OCI-LY7 (cell line): ENCODE measurements at regions of chr2 and their contacts with region 1.

Region 1: GRCh38 chr2:65432227-65433190 is at the start of gene SPRED2:
- DNase-seq: peak; percentile 92
- H3K4me3 ChIP-seq: peak within 1 kb of the TSS; percentile 93
- H3K27ac ChIP-seq: peak within 1 kb of the TSS; percentile 77
- H3K4me1 ChIP-seq: peaks cover 44% of the 10 kb centered on the region
- CTCF ChIP-seq: no peak
- total RNA-seq, gene SPRED2: 4.9 and 8.0 TPM in 2 replicates

Region 2: DNA sequence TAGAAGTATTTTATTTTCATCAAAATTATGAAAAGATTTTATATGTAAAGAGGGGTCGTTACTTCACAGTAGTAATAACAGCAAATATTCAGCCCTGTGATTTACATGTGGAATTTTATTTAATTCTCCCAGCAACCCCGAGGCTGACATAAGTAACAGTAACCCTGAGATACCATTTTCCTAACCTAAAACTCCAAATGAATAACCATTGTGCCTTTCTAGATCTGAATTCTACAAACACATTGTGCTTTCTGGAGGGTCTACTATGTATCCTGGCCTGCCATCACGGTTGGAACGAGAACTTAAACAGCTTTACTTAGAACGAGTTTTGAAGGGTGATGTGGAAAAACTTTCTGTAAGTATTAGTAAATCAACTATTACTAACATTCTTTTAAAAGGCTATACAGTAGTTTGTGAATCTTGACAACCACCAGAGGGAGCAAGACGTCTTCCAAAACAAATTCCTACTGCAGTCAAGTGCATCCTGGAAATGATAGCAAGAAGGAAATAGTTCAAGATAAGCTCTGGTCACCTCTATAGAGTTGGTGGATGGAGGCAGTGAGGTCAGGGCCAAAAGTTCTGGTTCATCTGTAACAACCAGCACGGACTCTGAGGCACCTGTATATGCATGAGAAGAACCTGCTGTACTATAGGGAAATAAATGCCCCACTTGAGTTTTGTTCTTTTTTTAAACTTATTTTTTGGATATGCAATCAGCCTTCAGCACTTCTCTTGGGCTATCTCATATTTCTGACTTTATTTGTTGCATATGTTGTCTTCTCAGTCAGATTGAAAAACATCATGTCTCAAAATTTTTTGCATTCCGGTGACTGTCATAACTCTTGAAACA is 167.5 kb before region 1 on chr2:
- CTCF ChIA-PET with region 1: interaction called, 3 read pairs
- POLR2A ChIA-PET with region 1: no interaction called
- intact Hi-C with region 1: loop called (anchors 1 kb)
- DNase-seq: peak; percentile 76
- H3K4me3 ChIP-seq: no peak overlapping the region
- H3K27ac ChIP-seq: no peak overlapping the region
- H3K4me1 ChIP-seq: peaks cover 9% of the 10 kb centered on the region
- CTCF ChIP-seq: peak; percentile 98

Region 3: DNA sequence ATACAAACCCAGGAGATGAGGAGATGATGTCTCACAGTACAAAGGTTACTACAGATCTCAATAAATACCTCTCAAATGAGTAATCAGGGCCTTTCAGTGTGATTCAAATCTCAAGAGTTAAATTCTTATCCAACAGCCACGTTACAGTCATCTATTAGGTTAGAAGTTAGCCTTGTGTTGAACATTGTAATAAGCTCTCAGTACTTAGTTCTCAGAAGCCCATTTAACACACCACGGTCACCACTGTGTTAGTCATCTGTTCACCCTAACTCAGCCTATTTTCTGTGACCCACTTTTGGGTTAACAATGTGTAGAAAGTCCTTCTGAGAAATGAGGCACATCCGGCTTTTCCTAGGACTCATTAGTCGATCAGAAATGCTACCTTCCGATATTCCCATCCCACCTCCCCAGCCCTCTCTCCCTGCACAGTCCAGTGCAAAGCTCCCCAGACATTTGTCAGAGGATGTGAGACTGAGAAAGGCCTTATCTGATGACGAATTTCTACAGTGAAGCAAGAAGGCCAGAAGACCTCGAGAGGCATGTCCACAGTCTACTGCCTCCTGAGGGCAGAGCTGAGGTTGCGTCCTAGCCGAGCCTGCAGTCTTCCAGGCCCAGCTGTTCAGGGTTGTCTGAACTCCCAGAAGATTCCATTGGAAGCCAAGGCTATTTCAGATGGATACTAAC is 112.3 kb before region 1 on chr2:
- CTCF ChIA-PET with region 1: no interaction called
- POLR2A ChIA-PET with region 1: interaction called, 3 read pairs
- intact Hi-C with region 1: loop called (anchors 1 kb)
- DNase-seq: peak; percentile 42
- H3K4me3 ChIP-seq: no peak overlapping the region
- H3K27ac ChIP-seq: no peak overlapping the region
- H3K4me1 ChIP-seq: peaks cover 46% of the 10 kb centered on the region
- CTCF ChIP-seq: peak; percentile 67

Region 4: DNA sequence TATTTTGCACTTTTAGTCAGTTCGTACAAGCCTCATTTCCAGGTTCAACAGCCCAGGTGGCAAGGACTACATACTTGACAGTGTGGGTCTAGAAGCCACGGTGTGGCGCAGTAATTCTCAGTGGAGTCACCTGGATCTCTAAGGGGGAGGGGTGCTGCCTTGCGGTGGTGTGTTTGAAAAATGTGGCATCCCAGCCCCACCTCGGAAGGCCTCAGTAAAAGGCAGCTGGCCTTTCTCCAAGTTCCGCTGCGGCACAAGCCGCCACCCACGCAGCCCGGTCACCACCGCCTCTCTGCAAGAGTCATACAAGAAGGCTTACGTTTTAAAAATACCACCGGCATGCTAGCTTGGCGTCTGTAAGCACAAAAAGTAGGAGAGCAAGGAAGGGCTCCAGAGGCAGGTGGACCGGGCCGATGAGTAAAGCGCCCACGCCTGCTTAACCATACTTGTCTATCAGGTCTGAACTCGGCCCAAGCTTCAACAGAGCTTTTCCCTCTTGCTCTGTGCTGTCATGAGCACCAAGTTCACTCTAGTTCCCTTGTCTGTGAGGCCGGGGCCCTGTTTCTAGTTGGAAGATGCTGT is 49.6 kb before region 1 on chr2:
- CTCF ChIA-PET with region 1: no interaction called
- POLR2A ChIA-PET with region 1: interaction called, 5 read pairs
- intact Hi-C with region 1: loop called (anchors 2 kb)
- DNase-seq: peak; percentile 85
- H3K4me3 ChIP-seq: peak overlapping the region; percentile 51
- H3K27ac ChIP-seq: peak overlapping the region; percentile 89
- H3K4me1 ChIP-seq: peaks cover 87% of the 10 kb centered on the region
- CTCF ChIP-seq: peak; percentile 82

Region 5: DNA sequence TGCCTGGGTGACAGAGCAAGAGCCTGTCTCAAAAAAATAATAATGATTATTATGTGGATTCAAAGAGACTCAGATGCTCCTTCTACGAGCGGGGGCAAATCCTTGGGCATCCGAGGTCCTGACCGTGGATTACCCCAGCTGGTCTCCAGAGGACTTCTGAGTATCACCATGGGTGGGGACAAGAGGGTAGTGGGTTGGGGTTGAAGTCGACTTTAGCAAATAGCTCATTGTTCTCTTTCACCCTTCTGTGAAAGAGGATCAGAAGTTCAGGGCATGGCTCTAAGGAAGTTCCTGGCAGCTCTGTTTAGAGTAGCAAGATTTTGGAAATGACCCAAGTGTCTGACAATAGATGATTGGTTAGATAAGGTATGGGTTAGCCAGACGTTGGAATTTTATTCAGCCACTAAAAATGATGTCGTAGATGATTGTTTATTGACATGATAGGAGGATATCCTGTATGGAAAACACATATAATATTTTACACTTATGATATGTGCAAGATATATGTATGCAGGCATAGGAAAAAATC is 58.9 kb after region 1 on chr2:
- CTCF ChIA-PET with region 1: no interaction called
- POLR2A ChIA-PET with region 1: no interaction called
- intact Hi-C with region 1: no loop called
- DNase-seq: no peak
- H3K4me3 ChIP-seq: no peak overlapping the region
- H3K27ac ChIP-seq: no peak overlapping the region
- H3K4me1 ChIP-seq: no peaks in the 10 kb centered on the region
- CTCF ChIP-seq: no peak

Region 6: GRCh38 chr2:65554765-65555591 is 122.5 kb after region 1 on chr2:
- CTCF ChIA-PET with region 1: no interaction called
- POLR2A ChIA-PET with region 1: interaction called, 3 read pairs
- intact Hi-C with region 1: loop called (anchors 1 kb)
- DNase-seq: peak; percentile 78
- H3K4me3 ChIP-seq: no peak overlapping the region
- H3K27ac ChIP-seq: peak overlapping the region; percentile 23
- H3K4me1 ChIP-seq: peaks cover 37% of the 10 kb centered on the region
- CTCF ChIP-seq: no peak

Region 7: GRCh38 chr2:65686927-65687521 is 254.5 kb after region 1 on chr2:
- CTCF ChIA-PET with region 1: no interaction called
- POLR2A ChIA-PET with region 1: no interaction called
- intact Hi-C with region 1: no loop called
- DNase-seq: peak; percentile 15
- H3K4me3 ChIP-seq: no peak overlapping the region
- H3K27ac ChIP-seq: no peak overlapping the region
- H3K4me1 ChIP-seq: no peaks in the 10 kb centered on the region
- CTCF ChIP-seq: peak; percentile 55; the same call in 1 of the 2 replicates